ENCODE measurements at regions of chr17 and their contacts with region 1.

Region 1: DNA sequence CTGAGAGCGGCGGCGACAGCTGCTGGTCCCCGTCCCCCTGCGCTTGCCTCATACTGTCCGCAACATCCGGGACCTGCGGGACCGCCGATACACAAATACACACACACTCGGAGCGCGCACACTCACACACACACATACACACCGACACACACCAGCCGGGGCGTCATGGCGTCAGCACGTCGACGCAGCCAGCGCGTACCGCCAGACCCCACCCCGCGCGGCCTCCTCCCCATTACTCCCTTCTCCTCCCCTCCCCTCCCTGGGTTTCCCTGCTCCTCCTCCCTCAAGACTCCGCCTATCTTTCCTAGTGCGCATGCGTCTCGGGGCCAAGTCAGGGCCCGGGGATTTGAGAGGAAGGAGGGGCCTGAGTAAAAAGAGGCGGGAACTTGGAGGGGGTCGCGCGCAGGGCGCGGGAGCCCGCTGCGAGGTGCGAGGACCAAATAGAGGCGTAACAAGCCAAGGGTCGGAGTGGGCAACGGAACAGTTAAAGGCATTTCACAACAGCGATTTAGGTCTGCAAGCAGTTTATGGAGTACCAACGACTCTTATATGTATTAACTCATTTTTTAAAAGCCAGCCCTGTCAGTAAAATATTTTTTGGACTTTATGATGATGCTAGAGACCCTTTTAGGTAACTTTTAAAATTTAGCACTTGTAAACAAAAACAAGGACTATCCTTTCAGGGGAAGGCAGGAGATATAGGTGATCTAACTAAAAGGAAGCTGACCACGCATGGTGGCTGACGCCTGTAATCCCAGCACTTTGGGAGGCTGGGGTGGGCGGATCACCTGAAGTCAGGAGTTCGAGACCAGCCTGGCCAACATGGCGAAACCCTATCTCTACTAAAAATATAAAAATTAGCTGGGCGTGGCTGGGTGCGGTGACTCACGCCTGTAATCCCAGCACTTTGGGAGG is at the start of gene SPOP:
- DNase-seq: peak; percentile 95
- ATAC-seq: peak; percentile 91
- H3K4me3 Mint-ChIP-seq: peak within 1 kb of the TSS; percentile 98
- H3K27ac Mint-ChIP-seq: peak within 1 kb of the TSS; percentile 99
- H3K4me1 Mint-ChIP-seq: peaks cover 43% of the 10 kb centered on the region
- H3K27me3 Mint-ChIP-seq: peaks cover 3% of the 10 kb centered on the region
- CTCF ChIP-seq: no peak
- total RNA-seq, gene SPOP: 57.4 and 65.8 TPM in 2 replicates

Region 2: DNA sequence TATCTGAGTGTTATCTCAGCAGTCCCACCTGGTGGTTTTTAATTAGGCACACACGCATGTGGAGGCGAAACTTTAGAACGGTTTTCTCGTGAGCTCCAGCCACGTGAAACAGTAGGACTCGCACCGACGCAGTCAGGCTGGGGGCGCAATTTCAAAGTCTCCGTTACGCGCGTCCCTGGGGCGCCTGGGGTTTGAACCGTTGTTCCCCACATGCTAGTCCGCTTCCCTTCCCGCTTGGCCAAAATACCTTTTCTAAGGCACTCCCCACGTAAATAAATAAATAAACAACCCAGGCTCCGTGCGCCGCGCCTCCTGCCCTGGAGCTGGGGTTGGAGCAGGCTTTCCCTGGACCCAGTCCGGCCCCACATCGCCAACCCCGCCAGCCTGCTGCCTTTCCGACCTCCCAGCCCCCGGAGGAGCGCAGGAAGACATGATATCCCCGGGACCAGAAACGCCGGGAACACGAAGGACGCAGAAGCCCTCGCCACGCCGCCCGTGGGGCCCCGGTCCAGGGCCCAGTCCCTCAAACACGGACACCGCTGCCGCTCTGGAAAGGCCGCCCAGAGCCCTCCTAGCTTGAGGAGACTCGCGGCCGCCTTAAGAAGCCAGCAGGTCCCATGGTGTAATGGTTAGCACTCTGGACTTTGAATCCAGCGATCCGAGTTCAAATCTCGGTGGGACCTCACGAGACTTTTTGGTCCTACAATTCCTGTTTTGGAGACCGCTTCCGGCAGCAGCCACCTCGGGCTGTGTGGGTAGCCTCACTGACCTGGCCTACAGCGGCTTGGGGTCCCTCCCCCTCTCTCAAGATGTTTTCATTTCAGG is 486.1 kb before region 1 on chr17:
- CTCF ChIA-PET with region 1: no interaction called
- POLR2A ChIA-PET with region 1: interaction called, 5 read pairs
- intact Hi-C with region 1: loop called (anchors 1 kb)
- DNase-seq: peak; percentile 96
- ATAC-seq: peak; percentile 40
- H3K4me3 Mint-ChIP-seq: peak overlapping the region; percentile 92
- H3K27ac Mint-ChIP-seq: peak overlapping the region; percentile 97
- H3K4me1 Mint-ChIP-seq: peaks cover 38% of the 10 kb centered on the region
- H3K27me3 Mint-ChIP-seq: peaks cover 2% of the 10 kb centered on the region
- CTCF ChIP-seq: no peak

Region 3: GRCh38 chr17:49390548-49391324 is 287.5 kb before region 1 on chr17:
- CTCF ChIA-PET with region 1: no interaction called
- POLR2A ChIA-PET with region 1: interaction called, 12 read pairs
- intact Hi-C with region 1: no loop called
- DNase-seq: peak; percentile 29
- ATAC-seq: peak; percentile 51
- H3K4me3 Mint-ChIP-seq: peak overlapping the region; percentile 77
- H3K27ac Mint-ChIP-seq: peak overlapping the region; percentile 98
- H3K4me1 Mint-ChIP-seq: peaks cover 77% of the 10 kb centered on the region
- H3K27me3 Mint-ChIP-seq: no peaks in the 10 kb centered on the region
- CTCF ChIP-seq: no peak

Region 4: DNA sequence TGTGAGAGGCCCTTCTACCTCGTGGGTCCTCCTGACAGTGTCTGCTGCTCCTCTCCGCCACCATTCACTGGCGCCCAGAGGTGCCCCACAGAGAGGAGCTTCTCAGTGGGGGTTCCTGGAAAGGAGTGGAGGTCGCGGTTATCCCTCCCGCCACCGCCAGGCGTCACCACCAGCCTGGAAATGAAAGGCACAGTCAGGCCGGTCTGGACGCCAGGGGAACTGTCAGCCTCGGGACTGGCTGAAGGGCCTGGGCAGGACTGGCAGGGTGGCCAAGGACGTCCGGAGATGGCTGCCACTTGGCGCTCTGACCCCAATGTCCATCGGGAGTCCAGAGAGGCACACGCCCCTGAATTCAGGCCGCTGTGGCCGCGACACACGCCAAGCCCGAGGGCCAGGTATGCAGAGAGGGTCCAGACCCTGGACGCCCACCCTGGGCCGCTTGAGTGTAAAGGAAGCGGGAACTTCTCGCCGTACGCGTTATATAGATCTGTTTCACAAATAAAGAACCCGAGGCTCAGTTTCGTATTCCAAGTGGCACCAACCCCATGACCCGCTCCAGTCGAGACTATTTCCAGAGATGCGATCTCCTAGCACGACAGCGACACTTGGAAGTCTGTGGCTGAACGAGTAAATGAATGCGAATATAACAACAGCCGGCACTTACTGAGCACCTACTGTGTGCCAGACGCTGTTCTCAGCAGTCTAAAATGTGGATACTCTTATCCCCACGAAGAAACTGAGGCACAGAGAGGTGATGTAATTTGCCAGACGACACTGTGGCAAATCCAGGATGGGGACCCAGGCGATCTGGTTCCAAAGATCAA is 110.1 kb before region 1 on chr17:
- CTCF ChIA-PET with region 1: interaction called, 7 read pairs
- POLR2A ChIA-PET with region 1: interaction called, 4 read pairs
- intact Hi-C with region 1: loop called (anchors 1 kb)
- DNase-seq: peak; percentile 89
- ATAC-seq: peak; percentile 72
- H3K4me3 Mint-ChIP-seq: peak overlapping the region; percentile 67
- H3K27ac Mint-ChIP-seq: no peak overlapping the region
- H3K4me1 Mint-ChIP-seq: peaks cover 9% of the 10 kb centered on the region
- H3K27me3 Mint-ChIP-seq: peaks cover 29% of the 10 kb centered on the region
- CTCF ChIP-seq: peak; percentile 45

Region 5: DNA sequence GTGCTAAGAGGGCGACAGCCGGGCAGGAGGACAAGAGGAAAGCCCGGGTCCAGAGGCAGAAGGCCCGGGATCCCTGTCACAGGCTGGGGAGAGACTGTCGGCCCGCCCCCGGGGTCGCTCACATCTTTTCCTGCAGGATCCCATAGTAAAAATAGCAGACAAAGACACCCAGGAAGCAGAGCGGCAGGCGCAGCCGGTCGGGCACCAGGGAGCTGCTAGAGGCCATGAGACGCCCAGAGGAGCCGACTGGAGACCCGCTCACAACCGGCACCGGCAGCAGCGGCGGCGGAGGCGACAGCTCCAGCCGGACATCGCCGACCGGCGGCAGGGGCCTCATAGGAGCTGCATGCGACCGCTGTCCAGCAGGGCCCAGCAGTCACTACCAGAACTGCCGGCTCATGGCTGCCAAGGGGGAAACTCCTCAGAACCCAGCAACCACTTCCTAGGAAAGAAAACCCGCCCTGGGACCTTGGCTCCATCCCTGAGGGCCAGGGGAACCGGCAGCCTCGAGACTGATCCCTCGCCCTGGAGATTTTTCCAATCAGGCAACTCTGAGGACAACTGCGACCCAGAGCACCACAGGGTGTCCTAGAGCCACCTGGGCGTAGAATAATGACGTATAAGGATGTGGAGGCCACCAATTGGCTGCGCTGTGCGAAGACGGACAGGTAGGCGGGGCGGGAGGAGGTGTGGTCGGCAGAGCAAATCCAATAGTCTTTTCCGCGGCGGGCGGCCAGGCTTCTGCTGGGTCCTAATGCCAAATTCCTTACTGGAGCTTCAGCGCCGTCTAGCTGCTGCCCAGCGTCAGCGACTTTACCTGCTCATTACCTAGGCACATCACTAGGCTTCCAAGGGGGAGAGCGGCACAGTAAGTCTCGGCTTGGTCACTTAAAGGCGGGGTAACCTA is 29.7 kb after region 1 on chr17 and contains the start of gene SLC35B1:
- CTCF ChIA-PET with region 1: no interaction called
- POLR2A ChIA-PET with region 1: interaction called, 20 read pairs
- intact Hi-C with region 1: loop called (anchors 1 kb)
- DNase-seq: peak; percentile 89
- ATAC-seq: peak; percentile 99
- H3K4me3 Mint-ChIP-seq: peak within 1 kb of the TSS; percentile 93
- H3K27ac Mint-ChIP-seq: peak within 1 kb of the TSS; percentile 99
- H3K4me1 Mint-ChIP-seq: peaks cover 44% of the 10 kb centered on the region
- H3K27me3 Mint-ChIP-seq: no peaks in the 10 kb centered on the region
- CTCF ChIP-seq: no peak
- total RNA-seq, gene SLC35B1: 51.8 and 53.8 TPM in 2 replicates

Region 6: DNA sequence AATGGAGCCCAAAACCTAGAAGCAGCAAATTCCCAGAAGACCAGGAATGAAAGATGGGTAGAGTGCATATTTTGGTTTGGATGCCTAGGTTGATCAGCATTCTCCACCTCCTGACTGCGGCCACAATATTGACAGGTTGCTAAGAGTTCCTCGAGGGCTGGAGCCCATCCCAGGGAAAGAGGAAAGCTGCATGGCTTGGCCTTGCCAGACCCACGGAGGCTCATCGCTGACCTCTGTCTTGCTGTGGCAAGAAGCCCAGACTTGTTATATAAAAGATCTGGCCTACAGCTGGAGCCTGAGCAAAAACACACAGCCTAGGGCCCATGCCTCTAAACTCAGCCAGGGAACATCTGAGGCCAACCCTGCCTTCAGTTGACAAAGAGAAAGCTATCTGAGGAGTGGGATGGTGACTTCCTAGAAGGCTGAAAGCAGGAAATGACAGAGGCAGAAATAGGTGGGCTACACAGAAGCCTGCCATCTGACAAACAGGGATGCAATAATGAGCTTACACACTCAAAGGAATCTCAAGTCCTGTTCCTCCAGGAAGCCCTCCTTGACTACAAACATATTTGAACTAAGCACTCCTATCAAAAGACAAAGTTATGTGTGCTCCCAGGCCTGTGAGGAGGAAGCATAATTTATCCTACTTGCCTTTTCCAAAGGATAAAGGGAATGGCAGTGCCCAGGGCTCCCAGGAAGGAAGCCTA is 52.0 kb after region 1 on chr17:
- CTCF ChIA-PET with region 1: no interaction called
- POLR2A ChIA-PET with region 1: no interaction called
- intact Hi-C with region 1: no loop called
- DNase-seq: no peak
- ATAC-seq: no peak
- H3K4me3 Mint-ChIP-seq: no peak overlapping the region
- H3K27ac Mint-ChIP-seq: no peak overlapping the region
- H3K4me1 Mint-ChIP-seq: peaks cover 45% of the 10 kb centered on the region
- H3K27me3 Mint-ChIP-seq: no peaks in the 10 kb centered on the region
- CTCF ChIP-seq: no peak

Region 7: DNA sequence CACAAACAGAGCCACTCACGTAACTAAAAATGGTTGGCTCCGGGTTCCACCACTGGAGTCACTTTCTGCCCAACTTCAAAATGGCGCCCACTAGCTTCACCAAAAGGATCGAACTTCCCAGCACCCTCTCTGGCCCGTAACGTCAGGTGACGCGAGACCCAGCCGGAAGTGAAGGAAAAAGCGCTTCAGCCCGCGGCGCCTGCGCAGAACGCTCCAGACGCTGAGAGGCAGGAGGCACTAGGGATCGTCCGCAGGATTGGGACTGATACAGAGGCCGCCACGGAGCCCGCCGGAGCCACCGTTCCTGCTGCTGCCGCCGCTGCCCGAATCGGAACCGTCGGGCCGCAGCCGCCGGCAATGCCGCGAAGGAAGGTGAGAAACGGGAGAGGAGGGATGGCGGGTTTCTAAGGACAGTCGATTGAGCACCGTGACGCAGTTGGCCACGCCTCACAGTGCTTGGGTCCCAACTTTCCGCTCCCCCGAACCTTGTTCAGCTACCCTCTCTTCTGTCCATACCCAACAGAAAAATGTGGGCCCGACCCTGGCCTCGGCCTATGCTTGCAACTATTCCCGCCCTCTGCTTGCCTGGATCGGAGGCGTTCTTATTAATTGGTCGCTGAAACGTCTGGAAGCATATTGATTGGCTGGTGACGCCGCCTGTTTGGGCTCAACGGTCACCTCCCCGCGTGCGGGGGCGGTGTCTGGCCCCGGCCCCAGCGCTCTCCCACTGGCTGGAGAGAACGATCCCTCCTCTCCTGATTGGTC is 110.5 kb after region 1 on chr17 and contains the start of gene KAT7:
- CTCF ChIA-PET with region 1: no interaction called
- POLR2A ChIA-PET with region 1: interaction called, 4 read pairs
- intact Hi-C with region 1: loop called (anchors 1 kb)
- DNase-seq: peak; percentile 90
- ATAC-seq: peak; percentile 86
- H3K4me3 Mint-ChIP-seq: peak within 1 kb of the TSS; percentile 94
- H3K27ac Mint-ChIP-seq: peak within 1 kb of the TSS; percentile 96
- H3K4me1 Mint-ChIP-seq: peaks cover 42% of the 10 kb centered on the region
- H3K27me3 Mint-ChIP-seq: no peaks in the 10 kb centered on the region
- CTCF ChIP-seq: no peak
- total RNA-seq, gene KAT7: 95.0 and 95.8 TPM in 2 replicates

Region 8: DNA sequence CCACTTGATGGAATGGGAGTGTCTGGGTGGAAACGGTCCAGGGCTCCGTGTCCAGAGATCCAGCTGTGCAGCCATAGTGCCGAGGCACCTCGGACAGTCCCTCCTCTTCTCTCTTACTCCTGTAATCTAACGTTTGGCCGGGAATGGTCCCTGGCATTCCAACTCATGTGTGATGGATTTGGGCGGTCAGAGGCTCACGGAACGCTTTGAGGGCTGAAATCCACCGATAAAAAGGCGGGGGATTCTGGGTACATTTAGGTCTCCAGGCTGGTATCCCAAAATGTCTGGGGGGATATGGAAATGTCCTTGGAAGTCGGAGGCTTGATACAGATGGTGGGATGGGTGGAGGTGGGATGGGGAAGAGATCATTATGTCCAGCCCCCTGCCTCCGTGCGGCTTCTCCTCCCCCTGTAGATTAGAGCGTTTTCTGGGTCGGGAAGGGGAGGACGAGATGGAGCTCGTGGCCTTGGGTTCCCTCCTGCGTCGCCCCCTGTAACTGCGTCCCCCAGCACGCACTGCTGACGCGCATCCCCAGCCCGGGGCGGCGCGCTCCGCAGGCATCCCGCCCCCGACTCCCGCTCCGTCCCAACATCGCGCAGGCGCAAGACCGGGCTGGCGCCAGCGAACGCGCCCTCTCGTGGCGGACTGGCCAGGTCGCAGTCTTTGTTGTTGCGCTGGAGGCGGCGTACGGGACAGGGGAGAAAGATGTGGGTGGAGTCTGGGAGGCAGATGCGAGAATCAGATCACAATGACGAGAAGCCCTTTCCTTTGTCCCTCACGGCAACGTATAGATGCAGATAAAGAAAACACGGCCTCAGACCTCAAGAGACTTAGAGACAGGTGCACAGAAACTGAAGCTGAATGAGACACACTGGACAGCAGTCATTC is 483.1 kb after region 1 on chr17:
- CTCF ChIA-PET with region 1: no interaction called
- POLR2A ChIA-PET with region 1: no interaction called
- intact Hi-C with region 1: no loop called
- DNase-seq: peak; percentile 89
- ATAC-seq: peak; percentile 95
- H3K4me3 Mint-ChIP-seq: peak overlapping the region; percentile 73
- H3K27ac Mint-ChIP-seq: peak overlapping the region; percentile 42
- H3K4me1 Mint-ChIP-seq: peaks cover 48% of the 10 kb centered on the region
- H3K27me3 Mint-ChIP-seq: no peaks in the 10 kb centered on the region
- CTCF ChIP-seq: peak; percentile 68